Mammary epithelial cell (primary cell): ENCODE measurements at regions of chr7 and their contacts with region 1.

Region 1: DNA sequence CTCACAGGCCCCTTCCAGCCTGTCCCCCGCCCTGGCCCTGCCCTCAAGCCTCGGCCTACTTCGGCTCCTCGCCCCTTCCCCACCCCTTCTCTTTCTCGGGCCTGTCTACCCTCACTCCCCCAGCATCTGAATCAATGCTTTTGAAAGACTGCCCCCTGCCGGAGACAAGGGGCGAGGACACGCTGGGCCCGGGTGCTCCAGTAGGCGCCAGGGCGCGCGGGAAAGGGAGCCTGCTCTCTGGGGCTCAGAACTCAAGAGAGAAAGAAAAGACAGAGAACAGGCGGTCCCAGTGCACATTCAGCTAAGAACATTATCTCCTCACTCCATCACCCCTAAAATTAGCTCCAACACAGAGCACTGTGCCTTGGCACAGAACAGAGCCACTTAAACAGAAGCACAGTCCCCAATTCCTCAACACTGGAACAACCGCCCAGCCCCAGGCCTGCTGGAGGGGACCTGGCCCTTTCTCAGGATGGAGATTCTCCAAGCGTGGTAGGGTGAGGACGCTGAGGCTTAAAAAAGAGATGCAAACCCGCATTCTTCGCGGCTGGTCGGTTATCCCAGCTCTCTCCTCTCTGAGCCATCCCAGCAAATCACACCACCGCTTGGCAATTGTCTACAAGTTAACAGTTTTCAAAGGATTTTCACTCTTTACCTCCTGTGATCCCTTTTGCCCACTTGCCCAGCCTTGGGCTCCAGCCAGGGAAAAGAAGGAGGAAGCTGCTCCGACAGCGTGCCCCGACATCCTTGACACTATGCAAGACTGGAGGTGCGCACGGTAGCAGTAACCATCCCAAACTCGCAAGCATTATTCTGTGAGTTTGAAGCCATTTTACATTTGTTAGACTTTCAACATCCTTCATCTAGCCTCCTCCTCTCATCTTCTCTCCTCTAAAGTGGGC is 2.1 kb downstream of the GIGYF1 start:
- DNase-seq: peak; percentile 50
- H3K4me3 ChIP-seq: peak overlapping the region in 2 of 3 experiments; percentile 86 to 95
- H3K27ac ChIP-seq: no peak overlapping the region
- H3K4me1 ChIP-seq: peaks cover 29% of the 10 kb centered on the region
- H3K27me3 ChIP-seq: no peaks in the 10 kb centered on the region
- CTCF ChIP-seq: peak; percentile 89 to 93

Region 2: GRCh38 chr7:100469227-100470044 is 222.5 kb before region 1 on chr7:
- CTCF ChIA-PET with region 1: no interaction called
- dilution Hi-C with region 1: no loop called
- in situ Hi-C with region 1: loop called in 1 of 2 experiments (anchors 10 kb)
- intact Hi-C with region 1: loop called (anchors 1 kb)
- DNase-seq: peak; percentile 37
- H3K4me3 ChIP-seq: no peak overlapping the region
- H3K27ac ChIP-seq: no peak overlapping the region
- H3K4me1 ChIP-seq: peaks cover 10% of the 10 kb centered on the region
- H3K27me3 ChIP-seq: no peaks in the 10 kb centered on the region
- CTCF ChIP-seq: peak; percentile 91 to 92

Region 3: DNA sequence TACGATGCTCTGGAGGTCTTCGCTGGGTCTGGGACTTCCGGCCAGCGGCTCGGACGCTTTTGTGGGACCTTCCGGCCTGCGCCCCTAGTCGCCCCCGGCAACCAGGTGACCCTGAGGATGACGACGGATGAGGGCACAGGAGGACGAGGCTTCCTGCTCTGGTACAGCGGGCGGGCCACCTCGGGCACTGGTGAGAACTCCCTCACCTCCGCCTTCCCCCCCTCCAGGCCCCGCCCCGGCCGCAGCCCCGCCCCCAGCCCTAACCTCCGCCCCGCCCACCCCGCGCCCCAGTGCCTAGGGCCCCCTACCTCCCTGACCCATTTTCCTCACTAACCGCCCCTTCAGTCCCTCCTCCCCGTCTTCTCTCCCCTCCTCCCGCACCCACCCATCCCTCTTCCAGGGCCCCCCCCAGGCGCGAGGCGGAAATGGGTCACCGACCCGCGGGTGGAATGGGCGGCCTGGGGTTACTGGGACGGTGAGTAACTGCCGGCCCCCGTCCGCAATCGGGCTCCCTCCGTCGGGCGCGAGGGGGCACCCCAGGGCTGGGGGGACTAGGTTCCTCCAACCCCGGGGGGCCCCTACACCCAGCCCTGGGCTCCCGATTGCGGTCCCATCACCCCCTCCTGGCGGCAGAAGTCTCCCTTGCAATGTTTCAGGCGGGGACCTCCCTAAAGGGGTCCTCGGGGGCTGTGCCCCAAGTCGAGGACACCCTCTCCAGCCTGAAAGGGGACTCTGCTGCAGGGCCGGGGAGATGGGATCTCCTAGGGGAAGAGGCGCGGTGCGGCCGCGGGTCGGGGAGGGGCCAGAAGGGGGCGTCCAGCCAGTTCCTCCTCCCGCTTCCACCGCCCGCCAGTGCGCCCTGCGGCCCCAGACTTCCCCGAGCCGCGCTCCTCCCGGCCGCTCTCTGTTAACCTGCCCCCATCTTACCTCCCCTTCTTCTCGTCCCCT is 87.6 kb before region 1 on chr7:
- CTCF ChIA-PET with region 1: interaction called, 4 read pairs
- dilution Hi-C with region 1: no loop called
- in situ Hi-C with region 1: no loop called
- intact Hi-C with region 1: loop called (anchors 1 kb)
- DNase-seq: peak; percentile 42
- H3K4me3 ChIP-seq: peak overlapping the region; percentile 53 to 74 (median 64)
- H3K27ac ChIP-seq: no peak overlapping the region
- H3K4me1 ChIP-seq: peaks cover 18% of the 10 kb centered on the region
- H3K27me3 ChIP-seq: no peaks in the 10 kb centered on the region
- CTCF ChIP-seq: peak in 1 of 2 donors; percentile 43

Region 4: DNA sequence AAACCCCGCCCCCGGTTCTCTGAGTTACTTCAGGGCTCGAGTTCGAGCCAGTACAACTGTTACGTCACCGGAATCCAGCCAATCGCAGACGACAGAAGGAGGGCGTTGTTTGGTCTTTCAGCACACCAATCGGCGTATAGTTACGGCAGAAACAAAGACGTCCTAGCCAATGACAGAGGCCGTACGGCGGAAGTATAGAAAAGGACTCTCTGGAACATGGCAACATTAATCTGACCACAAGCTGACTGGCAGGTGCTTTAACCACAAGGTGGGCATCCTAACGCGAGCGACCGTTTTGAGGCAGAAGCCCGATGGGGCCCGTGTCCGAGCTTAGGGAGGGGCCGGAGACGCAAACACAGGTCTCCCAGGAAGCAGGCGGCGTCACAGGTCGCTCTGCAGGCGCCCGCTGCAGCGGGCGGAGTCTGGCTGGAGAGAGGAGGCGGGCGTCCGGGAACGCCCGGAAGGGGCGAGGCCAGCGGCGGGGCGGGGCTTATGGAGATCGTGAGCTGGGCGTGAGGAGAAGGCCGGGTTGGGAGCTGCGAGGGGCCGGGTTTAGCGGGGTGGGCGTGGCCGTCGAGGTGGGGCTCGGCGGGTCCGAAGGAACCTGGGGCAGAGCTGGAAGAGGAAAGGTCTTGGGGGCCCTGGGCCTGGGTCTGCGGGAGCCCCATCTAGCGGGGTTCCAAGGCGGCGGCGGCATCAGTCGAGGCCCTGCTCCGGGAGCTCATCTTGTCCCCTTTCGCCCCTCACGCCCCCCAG is 79.8 kb before region 1 on chr7 and contains the start of gene MOSPD3:
- CTCF ChIA-PET with region 1: interaction called, 4 read pairs
- dilution Hi-C with region 1: loop called (anchors 5 kb)
- in situ Hi-C with region 1: no loop called
- intact Hi-C with region 1: no loop called
- DNase-seq: peak; percentile 98
- H3K4me3 ChIP-seq: peak within 1 kb of the TSS; percentile 67 to 84 (median 70)
- H3K27ac ChIP-seq: peak within 1 kb of the TSS; percentile 86
- H3K4me1 ChIP-seq: peaks cover 6% of the 10 kb centered on the region
- H3K27me3 ChIP-seq: no peaks in the 10 kb centered on the region
- CTCF ChIP-seq: no peak
- total RNA-seq, gene MOSPD3: 6.8 to 16.3 TPM

Region 5: GRCh38 chr7:100632951-100633717 is 58.8 kb before region 1 on chr7:
- CTCF ChIA-PET with region 1: no interaction called
- dilution Hi-C with region 1: no loop called
- in situ Hi-C with region 1: no loop called
- intact Hi-C with region 1: loop called (anchors 2 kb)
- DNase-seq: peak; percentile 12
- H3K4me3 ChIP-seq: peak overlapping the region; percentile 42 to 54 (median 48)
- H3K27ac ChIP-seq: no peak overlapping the region
- H3K4me1 ChIP-seq: peaks cover 8% of the 10 kb centered on the region
- H3K27me3 ChIP-seq: no peaks in the 10 kb centered on the region
- CTCF ChIP-seq: peak in 1 of 2 donors; percentile 19

Region 6: GRCh38 chr7:100837099-100837836 is 145.3 kb after region 1 on chr7:
- CTCF ChIA-PET with region 1: no interaction called
- dilution Hi-C with region 1: loop called (anchors 10 kb)
- in situ Hi-C with region 1: no loop called
- intact Hi-C with region 1: no loop called
- DNase-seq: peak; percentile 84
- H3K4me3 ChIP-seq: peak overlapping the region in 2 of 3 experiments; percentile 10 to 29
- H3K27ac ChIP-seq: no peak overlapping the region
- H3K4me1 ChIP-seq: peaks cover 12% of the 10 kb centered on the region
- H3K27me3 ChIP-seq: no peaks in the 10 kb centered on the region
- CTCF ChIP-seq: no peak